ENCODE measurements at regions of chr6 and their contacts with region 1.

Region 1: DNA sequence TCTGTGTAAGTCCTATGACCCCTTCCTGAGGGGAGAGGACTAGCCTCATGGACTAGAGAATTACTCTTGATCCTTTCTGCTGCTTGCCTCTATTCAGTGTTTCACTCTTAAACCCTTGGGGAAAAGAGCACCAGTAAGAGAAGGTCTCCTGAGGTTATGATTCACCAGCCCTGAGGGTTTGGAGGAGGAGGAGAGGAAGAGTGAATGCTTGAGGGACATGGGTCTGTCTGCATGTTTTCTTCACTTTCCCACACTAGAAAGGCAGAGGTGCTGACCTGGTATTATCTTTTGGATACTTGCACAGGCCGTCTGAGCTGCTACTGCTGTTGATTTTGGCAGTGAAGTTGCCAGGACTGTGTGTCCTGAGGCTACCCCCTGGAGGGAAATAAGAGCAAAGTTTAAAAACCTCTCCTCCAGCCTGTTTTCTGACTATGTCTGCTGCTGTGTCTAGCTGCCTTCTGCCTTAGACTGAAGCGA is 78.3 kb downstream of the CD109 start:
- DNase-seq: no peak
- ATAC-seq: no peak
- H3K4me3 ChIP-seq: no peak overlapping the region
- H3K4me3 Mint-ChIP-seq: no peak overlapping the region
- H3K27ac ChIP-seq: no peak overlapping the region
- H3K27ac Mint-ChIP-seq: no peak overlapping the region
- H3K4me1 ChIP-seq: no peaks in the 10 kb centered on the region
- H3K4me1 Mint-ChIP-seq: no peaks in the 10 kb centered on the region
- H3K27me3 ChIP-seq: no peaks in the 10 kb centered on the region
- H3K27me3 Mint-ChIP-seq: no peaks in the 10 kb centered on the region

Region 2: DNA sequence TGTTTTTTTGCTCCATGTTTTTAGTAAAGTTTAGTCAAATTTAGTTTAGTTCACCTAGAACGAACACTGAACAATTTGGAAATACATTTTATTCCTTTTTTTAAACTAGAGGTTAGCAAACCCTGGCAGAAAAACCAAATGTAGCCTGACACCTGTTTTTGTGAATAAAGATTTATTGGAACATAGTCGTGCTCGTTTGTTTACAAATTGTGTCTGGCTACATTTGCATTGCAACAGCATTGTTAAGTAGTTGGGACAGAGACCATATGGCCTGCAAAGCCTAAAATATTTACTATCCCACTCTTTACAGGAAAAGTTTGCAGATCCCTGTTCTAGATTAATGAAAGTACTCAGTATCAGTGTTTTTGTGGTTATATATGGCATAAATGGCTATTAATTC is 21.4 kb before region 1 on chr6:
- CTCF ChIA-PET with region 1: no interaction called
- POLR2A ChIA-PET with region 1: no interaction called
- DNase-seq: no peak
- ATAC-seq: no peak
- H3K4me3 ChIP-seq: no peak overlapping the region
- H3K4me3 Mint-ChIP-seq: no peak overlapping the region
- H3K27ac ChIP-seq: no peak overlapping the region
- H3K27ac Mint-ChIP-seq: no peak overlapping the region
- H3K4me1 ChIP-seq: no peaks in the 10 kb centered on the region
- H3K4me1 Mint-ChIP-seq: no peaks in the 10 kb centered on the region
- H3K27me3 ChIP-seq: no peaks in the 10 kb centered on the region
- H3K27me3 Mint-ChIP-seq: no peaks in the 10 kb centered on the region

Region 3: GRCh38 chr6:73790574-73790973 is 16.2 kb after region 1 on chr6:
- CTCF ChIA-PET with region 1: no interaction called
- POLR2A ChIA-PET with region 1: interaction called in 1 of 2 experiments, 10 read pairs
- DNase-seq: no peak
- ATAC-seq: no peak
- H3K4me3 ChIP-seq: no peak overlapping the region
- H3K4me3 Mint-ChIP-seq: no peak overlapping the region
- H3K27ac ChIP-seq: no peak overlapping the region
- H3K27ac Mint-ChIP-seq: no peak overlapping the region
- H3K4me1 ChIP-seq: no peaks in the 10 kb centered on the region
- H3K4me1 Mint-ChIP-seq: no peaks in the 10 kb centered on the region
- H3K27me3 ChIP-seq: no peaks in the 10 kb centered on the region
- H3K27me3 Mint-ChIP-seq: no peaks in the 10 kb centered on the region

Region 4: GRCh38 chr6:75429061-75429703 is 1654.8 kb after region 1 on chr6:
- CTCF ChIA-PET with region 1: interaction called in 1 of 2 experiments, 11 read pairs
- POLR2A ChIA-PET with region 1: no interaction called
- DNase-seq: no peak
- ATAC-seq: no peak
- H3K4me3 ChIP-seq: no peak overlapping the region
- H3K4me3 Mint-ChIP-seq: no peak overlapping the region
- H3K27ac ChIP-seq: no peak overlapping the region
- H3K27ac Mint-ChIP-seq: no peak overlapping the region
- H3K4me1 ChIP-seq: no peaks in the 10 kb centered on the region
- H3K4me1 Mint-ChIP-seq: peaks cover 9 to 13% (median 9%) of the 10 kb centered on the region in 3 donors
- H3K27me3 ChIP-seq: no peaks in the 10 kb centered on the region
- H3K27me3 Mint-ChIP-seq: peaks cover 2 to 3% of the 10 kb centered on the region in 2 donors

Measured in T-cell (primary cell).